GM12878 (cell line): ENCODE measurements at regions of chr9 and their contacts with region 1.

Region 1: DNA sequence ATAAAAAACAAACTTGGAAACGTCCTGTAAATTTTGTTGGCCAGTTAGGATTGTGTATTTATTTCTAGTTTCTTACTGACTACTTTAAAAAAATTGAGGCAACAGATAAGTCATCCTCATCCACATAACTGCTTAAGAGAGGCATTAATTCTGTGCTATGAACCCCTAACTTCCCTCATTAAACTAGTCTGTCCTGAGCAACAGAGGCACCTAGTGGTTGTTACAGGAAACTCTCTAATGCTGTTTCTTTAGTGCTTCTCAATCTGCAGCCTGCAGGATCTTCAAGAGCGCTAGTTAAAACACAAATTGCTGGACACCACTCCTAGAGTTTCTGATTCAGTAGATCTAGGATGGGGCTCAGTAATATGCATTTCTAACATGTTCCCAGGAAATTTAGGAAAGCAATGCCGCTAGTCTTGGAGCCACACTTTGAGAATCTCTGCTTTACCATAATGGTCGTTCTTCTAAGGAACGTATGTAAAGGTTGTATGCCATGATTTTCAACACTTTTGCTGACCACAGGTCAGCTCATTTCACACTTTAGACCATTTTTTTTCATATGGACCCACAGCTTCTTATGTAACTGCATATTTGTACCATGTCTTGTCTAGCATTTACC is 410.1 kb upstream of the SMARCA2 start:
- DNase-seq: peak; percentile 11
- ATAC-seq: peak; percentile 98
- H3K4me3 ChIP-seq: no peak overlapping the region
- H3K27ac ChIP-seq: no peak overlapping the region
- H3K4me1 ChIP-seq: no peaks in the 10 kb centered on the region
- H3K27me3 ChIP-seq: no peaks in the 10 kb centered on the region
- CTCF ChIP-seq: peak; percentile 69 to 73 (median 71)
- EP300 ChIP-seq: no peak
- POLR2A ChIP-seq: no peak
- RAD21 ChIP-seq: peak; percentile 99

Region 2: GRCh38 chr9:1100945-1101344 is 504.1 kb before region 1 on chr9:
- CTCF ChIA-PET with region 1: interaction called, 3 read pairs
- POLR2A ChIA-PET with region 1: no interaction called
- RAD21 ChIA-PET with region 1: interaction called, 5 read pairs
- SMC1A ChIA-PET with region 1: interaction called, 3 read pairs
- in situ Hi-C with region 1: no loop called
- intact Hi-C with region 1: loop called (anchors 5 kb)
- DNase-seq: no peak
- ATAC-seq: peak; percentile 59
- H3K4me3 ChIP-seq: no peak overlapping the region
- H3K27ac ChIP-seq: no peak overlapping the region
- H3K4me1 ChIP-seq: no peaks in the 10 kb centered on the region
- H3K27me3 ChIP-seq: no peaks in the 10 kb centered on the region
- CTCF ChIP-seq: peak; percentile 28 to 49 (median 36); a peak in 4 of 6 replicates
- EP300 ChIP-seq: no peak
- POLR2A ChIP-seq: no peak
- RAD21 ChIP-seq: peak; percentile 40; the same call in 1 of the 2 replicates

Region 3: GRCh38 chr9:1248743-1249142 is 356.3 kb before region 1 on chr9:
- CTCF ChIA-PET with region 1: no interaction called
- POLR2A ChIA-PET with region 1: no interaction called
- RAD21 ChIA-PET with region 1: no interaction called
- SMC1A ChIA-PET with region 1: no interaction called
- in situ Hi-C with region 1: no loop called
- intact Hi-C with region 1: no loop called
- DNase-seq: no peak
- ATAC-seq: no peak
- H3K4me3 ChIP-seq: no peak overlapping the region
- H3K27ac ChIP-seq: no peak overlapping the region
- H3K4me1 ChIP-seq: no peaks in the 10 kb centered on the region
- H3K27me3 ChIP-seq: no peaks in the 10 kb centered on the region
- CTCF ChIP-seq: no peak
- EP300 ChIP-seq: no peak
- POLR2A ChIP-seq: no peak
- RAD21 ChIP-seq: no peak

Region 4: DNA sequence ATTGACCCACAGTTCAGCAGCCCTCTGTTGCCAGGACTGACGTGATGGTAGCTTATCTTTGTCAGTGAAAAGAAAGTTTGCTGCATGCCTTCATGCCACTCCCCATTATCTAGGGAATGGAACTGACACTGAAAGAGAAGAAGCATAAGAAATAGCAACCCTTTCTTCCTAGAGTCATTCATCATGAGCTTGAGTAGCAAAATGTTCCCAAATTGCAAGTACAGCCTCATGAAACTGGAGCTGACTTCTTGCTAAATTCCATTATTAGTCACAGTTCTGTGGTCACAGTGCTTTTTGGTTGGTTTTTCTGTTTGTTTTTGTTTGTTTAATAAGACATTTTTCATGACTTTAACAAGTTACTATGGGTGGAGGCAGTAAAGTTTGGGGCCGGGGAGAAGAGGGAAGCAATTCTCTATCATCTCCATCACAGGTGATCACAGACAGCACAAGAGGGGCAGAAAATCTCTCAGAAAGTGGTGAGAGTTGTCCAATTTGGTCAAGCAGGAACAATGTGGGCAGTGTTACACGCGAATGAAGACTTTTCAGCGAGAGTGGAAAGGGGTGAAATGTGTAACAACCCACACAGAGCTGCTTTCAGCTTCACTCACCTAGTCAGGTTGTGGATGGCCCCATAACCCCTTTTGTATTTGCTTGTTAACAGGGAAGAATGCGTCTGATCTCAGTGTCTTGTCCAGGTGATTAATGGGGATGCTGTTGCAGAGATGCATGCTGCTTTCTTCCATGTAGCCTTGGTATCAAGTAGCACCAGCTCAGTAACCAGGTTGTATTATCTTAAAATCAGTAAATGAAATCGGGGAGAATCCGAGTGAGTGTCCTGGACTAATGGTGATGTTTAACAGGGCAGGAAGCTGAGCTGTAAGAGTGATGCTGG is 114.5 kb before region 1 on chr9:
- CTCF ChIA-PET with region 1: interaction called, 3 read pairs
- POLR2A ChIA-PET with region 1: no interaction called
- RAD21 ChIA-PET with region 1: interaction called, 6 read pairs
- SMC1A ChIA-PET with region 1: interaction called, 10 read pairs
- in situ Hi-C with region 1: no loop called
- intact Hi-C with region 1: no loop called
- DNase-seq: peak; percentile 35
- ATAC-seq: peak; percentile 96
- H3K4me3 ChIP-seq: no peak overlapping the region
- H3K27ac ChIP-seq: peak overlapping the region; percentile 22; the same call in 1 of the 2 replicates
- H3K4me1 ChIP-seq: peaks cover 9% of the 10 kb centered on the region; the same call in 1 of the 2 replicates
- H3K27me3 ChIP-seq: no peaks in the 10 kb centered on the region
- CTCF ChIP-seq: no peak
- EP300 ChIP-seq: peak; percentile 45 to 59; a peak in 2 of 4 replicates
- POLR2A ChIP-seq: no peak
- RAD21 ChIP-seq: no peak

Region 5: DNA sequence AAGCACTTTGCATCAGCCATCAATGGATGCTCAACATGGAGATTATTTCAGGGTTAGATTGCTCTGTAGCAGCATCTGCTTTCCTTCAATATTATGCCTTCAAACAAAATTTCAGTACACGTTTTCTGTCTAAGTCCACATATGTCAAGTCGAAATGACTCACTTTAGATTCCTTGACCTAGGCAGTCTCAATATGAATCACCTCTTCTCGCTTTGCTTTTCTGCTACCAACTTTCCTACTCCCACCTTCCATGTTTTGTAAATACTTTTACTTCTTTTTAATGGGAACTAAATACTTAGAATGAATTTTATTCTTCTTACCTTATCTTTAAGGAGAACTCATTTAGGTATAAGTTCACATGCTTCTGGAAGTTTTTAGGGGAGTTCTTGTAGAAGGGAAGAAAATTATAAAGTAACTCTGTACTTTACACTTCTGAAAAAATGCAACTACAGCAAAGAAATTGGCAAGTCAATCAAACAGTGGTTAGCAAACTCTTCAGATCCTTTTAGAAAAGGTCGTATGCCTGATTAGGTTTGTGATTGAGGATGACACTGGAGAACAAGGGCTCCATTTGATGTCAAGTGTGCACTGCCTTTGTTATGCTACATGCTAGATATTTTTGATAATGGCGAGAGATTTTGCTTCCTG is 68.4 kb before region 1 on chr9:
- CTCF ChIA-PET with region 1: interaction called, 7 read pairs
- POLR2A ChIA-PET with region 1: interaction called, 4 read pairs
- RAD21 ChIA-PET with region 1: interaction called, 4 read pairs
- SMC1A ChIA-PET with region 1: interaction called, 13 read pairs
- in situ Hi-C with region 1: no loop called
- intact Hi-C with region 1: no loop called
- DNase-seq: peak; percentile 38
- ATAC-seq: peak; percentile 86
- H3K4me3 ChIP-seq: no peak overlapping the region
- H3K27ac ChIP-seq: no peak overlapping the region
- H3K4me1 ChIP-seq: peaks cover 6% of the 10 kb centered on the region; the same call in 1 of the 2 replicates
- H3K27me3 ChIP-seq: no peaks in the 10 kb centered on the region
- CTCF ChIP-seq: no peak
- EP300 ChIP-seq: peak; percentile 64 to 85; a peak in 3 of 4 replicates
- POLR2A ChIP-seq: no peak
- RAD21 ChIP-seq: no peak

Region 6: GRCh38 chr9:1580215-1580614 is 24.8 kb before region 1 on chr9:
- CTCF ChIA-PET with region 1: interaction called, 12 read pairs
- POLR2A ChIA-PET with region 1: no interaction called
- RAD21 ChIA-PET with region 1: interaction called, 13 read pairs
- SMC1A ChIA-PET with region 1: interaction called, 32 read pairs
- in situ Hi-C with region 1: no loop called
- intact Hi-C with region 1: no loop called
- DNase-seq: no peak
- ATAC-seq: peak; percentile 92
- H3K4me3 ChIP-seq: no peak overlapping the region
- H3K27ac ChIP-seq: no peak overlapping the region
- H3K4me1 ChIP-seq: 0 out of 2 replicates have a peak, but pooled peaks cover 2% of the 10 kb centered on the region
- H3K27me3 ChIP-seq: no peaks in the 10 kb centered on the region
- CTCF ChIP-seq: no peak
- EP300 ChIP-seq: no peak
- POLR2A ChIP-seq: no peak
- RAD21 ChIP-seq: no peak

Region 7: DNA sequence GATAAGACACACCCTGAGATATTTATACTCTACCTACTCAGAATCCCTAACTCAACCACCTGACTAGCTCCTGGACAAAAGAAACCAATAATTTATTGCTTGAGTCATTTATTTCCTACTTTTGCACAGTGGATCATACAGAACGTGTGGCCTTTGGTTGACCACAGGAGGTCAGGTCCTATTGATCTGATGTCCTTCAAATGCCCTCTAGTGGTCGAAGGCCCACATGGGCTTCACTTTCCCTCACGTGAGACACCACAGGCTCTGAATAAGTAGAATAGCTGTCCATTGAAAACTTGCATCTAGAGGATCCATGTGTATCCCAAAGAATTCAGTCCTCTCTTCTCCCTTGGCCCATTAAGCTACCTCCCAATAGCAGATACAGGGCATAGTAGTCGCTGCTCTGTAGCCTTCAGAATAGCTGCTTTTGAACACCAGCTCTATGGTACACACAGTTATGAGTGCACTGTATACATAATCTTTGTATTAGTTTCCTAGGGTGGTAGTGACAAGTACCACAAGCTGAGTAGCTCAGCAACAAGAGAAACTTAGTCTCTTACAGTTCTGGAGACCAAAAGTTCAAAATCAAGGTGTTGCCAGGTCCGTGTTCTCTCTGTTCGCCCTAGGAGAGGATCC is 232.5 kb after region 1 on chr9:
- CTCF ChIA-PET with region 1: interaction called, 16 read pairs
- POLR2A ChIA-PET with region 1: no interaction called
- RAD21 ChIA-PET with region 1: interaction called, 9 read pairs
- SMC1A ChIA-PET with region 1: interaction called, 9 read pairs
- in situ Hi-C with region 1: no loop called
- intact Hi-C with region 1: loop called (anchors 5 kb)
- DNase-seq: peak; percentile 45
- ATAC-seq: peak; percentile 98
- H3K4me3 ChIP-seq: no peak overlapping the region
- H3K27ac ChIP-seq: no peak overlapping the region
- H3K4me1 ChIP-seq: no peaks in the 10 kb centered on the region
- H3K27me3 ChIP-seq: no peaks in the 10 kb centered on the region
- CTCF ChIP-seq: peak; percentile 70 to 77 (median 74)
- EP300 ChIP-seq: no peak
- POLR2A ChIP-seq: no peak
- RAD21 ChIP-seq: peak; percentile 71